Esophagus squamous epithelium (tissue), 5 donors: ENCODE measurements at regions of chr2 and their contacts with region 1.

Region 1: DNA sequence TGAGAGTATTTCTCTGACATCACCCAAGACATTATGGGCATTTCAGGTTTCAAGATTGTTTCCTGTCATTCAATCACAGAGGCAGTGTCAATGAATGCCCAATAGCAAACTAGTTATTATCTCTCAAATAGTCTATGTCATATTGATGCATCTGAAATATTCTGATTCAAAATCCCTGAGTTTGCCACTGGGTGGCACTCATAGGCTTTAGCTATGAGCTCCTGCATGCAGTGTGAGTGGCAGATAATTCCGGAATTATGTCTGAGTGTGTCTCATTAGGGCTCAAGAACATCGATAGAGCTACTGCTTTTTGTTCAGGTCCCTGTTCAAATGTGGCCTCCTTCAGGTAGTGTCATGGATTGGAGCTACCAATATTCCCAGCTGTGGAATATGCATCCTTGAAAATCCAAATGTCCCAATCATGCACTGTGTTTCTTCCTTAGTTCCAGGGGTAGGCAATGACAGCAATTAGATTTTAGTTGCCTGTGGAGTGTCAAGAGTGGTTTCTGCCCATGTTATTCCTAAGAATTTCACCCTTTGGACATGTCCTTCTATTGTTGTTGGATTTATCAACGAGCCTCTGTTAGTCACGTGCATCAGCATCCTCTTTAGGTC is 7.8 kb upstream of the OR6B3 start:
- DNase-seq: no peak
- H3K4me3 ChIP-seq: no peak overlapping the region
- H3K27ac ChIP-seq: no peak overlapping the region
- H3K4me1 ChIP-seq: no peaks in the 10 kb centered on the region
- H3K27me3 ChIP-seq: peaks cover 0 to 63% (median 0%) of the 10 kb centered on the region in 4 donors
- CTCF ChIP-seq: peak; percentile 16 to 78 (median 67)
- POLR2A ChIP-seq: no peak

Region 2: DNA sequence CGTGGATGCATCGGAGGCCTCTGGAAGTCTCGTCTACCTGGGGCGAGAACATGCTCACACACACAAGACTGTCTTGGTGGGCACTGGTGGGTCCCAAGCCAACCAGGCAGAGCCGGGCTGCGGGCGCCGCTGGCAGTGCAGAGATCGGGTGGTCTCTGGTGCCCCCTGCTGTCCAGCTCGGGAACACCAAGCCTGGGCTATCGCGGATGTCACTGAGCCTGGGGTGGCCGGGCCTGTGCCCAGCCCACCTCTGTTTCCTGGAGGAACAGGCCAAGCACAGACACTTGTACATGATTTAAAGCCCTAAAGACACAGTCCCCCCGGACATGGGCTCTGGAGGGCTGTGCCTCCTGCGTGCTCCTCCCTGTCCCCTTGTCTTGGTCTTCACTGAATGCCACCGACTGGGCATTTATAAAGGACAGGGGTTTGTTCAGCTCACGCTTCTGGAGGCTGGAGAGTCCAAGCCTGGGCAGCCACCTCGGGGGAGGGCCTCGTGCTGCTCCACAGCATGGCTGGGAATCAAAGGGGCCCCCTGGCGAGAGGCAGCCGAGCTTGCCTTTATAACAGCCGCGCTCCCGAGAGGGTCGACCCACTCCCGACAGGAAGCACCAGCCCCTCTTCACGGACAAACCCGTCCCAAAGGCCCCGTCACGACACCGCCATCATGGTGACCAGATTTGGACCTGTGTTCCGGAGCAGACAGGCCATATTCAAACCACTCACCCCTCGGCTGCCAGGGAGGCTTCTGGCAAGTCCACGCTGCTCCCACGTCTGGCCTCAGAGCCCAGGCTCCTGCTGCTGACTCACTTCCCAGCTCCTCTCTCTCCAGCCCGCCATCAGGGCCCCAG is 82.9 kb after region 1 on chr2:
- intact Hi-C with region 1: loop called (anchors 5 kb)
- DNase-seq: no peak
- H3K4me3 ChIP-seq: no peak overlapping the region
- H3K27ac ChIP-seq: no peak overlapping the region
- H3K4me1 ChIP-seq: peaks cover 0 to 6% (median 0%) of the 10 kb centered on the region in 3 donors
- H3K27me3 ChIP-seq: peaks cover 0 to 53% (median 0%) of the 10 kb centered on the region in 4 donors
- CTCF ChIP-seq: peak; percentile 73 to 93 (median 92)
- POLR2A ChIP-seq: no peak